ENCODE measurements at regions of chr6 and their contacts with region 1.

Region 1: GRCh38 chr6:15340775-15341174 is 94.9 kb downstream of the JARID2 start:
- DNase-seq: no peak
- H3K4me3 Mint-ChIP-seq: peak overlapping the region; percentile 72
- H3K27ac Mint-ChIP-seq: peak overlapping the region; percentile 70
- H3K4me1 Mint-ChIP-seq: peaks cover 64% of the 10 kb centered on the region
- H3K27me3 Mint-ChIP-seq: no peaks in the 10 kb centered on the region

Region 2: GRCh38 chr6:15305496-15305895 is 35.3 kb before region 1 on chr6:
- intact Hi-C with region 1: loop called (anchors 5 kb)
- DNase-seq: no peak
- H3K4me3 Mint-ChIP-seq: peak overlapping the region; percentile 60
- H3K27ac Mint-ChIP-seq: peak overlapping the region; percentile 82
- H3K4me1 Mint-ChIP-seq: peaks cover 64% of the 10 kb centered on the region
- H3K27me3 Mint-ChIP-seq: no peaks in the 10 kb centered on the region

Region 3: GRCh38 chr6:15365273-15365687 is 24.5 kb after region 1 on chr6:
- intact Hi-C with region 1: loop called (anchors 5 kb)
- DNase-seq: peak; percentile 75
- H3K4me3 Mint-ChIP-seq: peak overlapping the region; percentile 18
- H3K27ac Mint-ChIP-seq: peak overlapping the region; percentile 22
- H3K4me1 Mint-ChIP-seq: peaks cover 41% of the 10 kb centered on the region
- H3K27me3 Mint-ChIP-seq: no peaks in the 10 kb centered on the region

Region 4: GRCh38 chr6:15420959-15421438 is 80.2 kb after region 1 on chr6:
- intact Hi-C with region 1: loop called (anchors 5 kb)
- DNase-seq: peak; percentile 70
- H3K4me3 Mint-ChIP-seq: peak overlapping the region; percentile 84
- H3K27ac Mint-ChIP-seq: peak overlapping the region; percentile 95
- H3K4me1 Mint-ChIP-seq: peaks cover 63% of the 10 kb centered on the region
- H3K27me3 Mint-ChIP-seq: no peaks in the 10 kb centered on the region